Left colon (tissue), 2 donors: ENCODE measurements at regions of chr12 and their contacts with region 1.

Region 1: DNA sequence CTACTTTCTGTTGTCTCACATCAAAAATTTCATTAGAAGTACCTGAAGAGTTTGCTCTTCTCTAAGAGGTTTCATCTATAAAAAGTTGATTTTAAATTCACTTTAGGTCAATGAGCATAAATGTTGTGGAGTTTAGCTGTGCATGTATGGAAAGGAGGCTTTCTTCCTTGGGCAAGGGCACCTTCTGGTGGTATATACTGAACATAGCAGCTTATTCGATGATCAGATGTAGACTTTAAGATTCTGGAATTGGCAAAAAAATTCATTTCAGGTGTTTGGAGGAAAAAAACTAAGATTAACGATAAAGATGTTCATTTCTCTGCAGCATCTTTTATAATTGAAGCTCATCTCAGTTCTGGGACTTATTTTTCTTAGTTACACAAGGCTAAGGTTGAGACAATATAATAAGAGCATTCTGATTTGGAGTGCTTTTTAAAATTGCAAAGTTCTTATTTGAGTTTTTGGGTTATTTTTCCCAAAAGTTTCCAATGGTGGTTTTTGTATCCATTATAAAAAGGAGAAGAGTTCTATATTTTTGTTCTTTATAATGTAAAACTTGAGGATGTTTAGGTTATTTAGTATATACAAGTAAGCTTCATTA is 46.8 kb downstream of the TMEM117 start:
- DNase-seq: no peak
- ATAC-seq: peak; percentile 91

Region 2: GRCh38 chr12:43776498-43776897 is 106.2 kb before region 1 on chr12:
- intact Hi-C with region 1: loop called in 1 of 2 experiments (anchors 10 kb)
- DNase-seq: no peak
- ATAC-seq: peak; percentile 71